Transverse colon (tissue), 4 donors: ENCODE measurements at regions of chr7 and their contacts with region 1.

Region 1: DNA sequence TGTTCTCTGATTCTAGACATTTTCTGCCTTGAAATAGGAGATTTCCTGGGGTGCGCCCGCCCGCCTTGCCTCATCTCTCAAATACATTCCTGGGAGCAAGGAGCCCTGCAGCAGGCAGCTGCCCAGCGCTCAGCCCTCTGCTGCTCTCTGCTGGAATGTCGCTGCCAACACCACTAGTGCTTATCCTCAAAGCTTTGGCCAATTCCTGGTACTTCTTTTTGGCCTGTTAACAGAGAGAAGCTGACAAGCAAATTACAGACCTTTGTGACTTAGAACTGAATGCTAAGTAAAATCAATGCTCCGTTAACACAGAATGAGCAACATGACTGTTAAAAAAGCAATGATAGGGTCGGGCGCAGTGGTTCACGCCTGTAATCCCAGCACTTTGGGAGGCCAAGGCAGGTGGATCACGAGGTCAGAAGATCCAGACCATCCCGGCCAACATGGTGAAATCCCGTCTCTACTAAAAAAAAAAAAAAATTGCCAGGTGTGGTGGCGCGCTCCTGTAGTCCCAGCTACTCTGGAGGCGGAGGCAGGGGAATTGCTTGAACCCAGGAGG is 41.9 kb upstream of the SYPL1 start:
- DNase-seq: peak; percentile 84
- H3K4me3 ChIP-seq: no peak overlapping the region
- H3K27ac ChIP-seq: no peak overlapping the region
- H3K4me1 ChIP-seq: peaks cover 0 to 21% (median 5%) of the 10 kb centered on the region in 4 donors
- H3K27me3 ChIP-seq: peaks cover 3% of the 10 kb centered on the region
- CTCF ChIP-seq: peak; percentile 90 to 97 (median 94)
- EP300 ChIP-seq: no peak
- POLR2A ChIP-seq: no peak

Region 2: DNA sequence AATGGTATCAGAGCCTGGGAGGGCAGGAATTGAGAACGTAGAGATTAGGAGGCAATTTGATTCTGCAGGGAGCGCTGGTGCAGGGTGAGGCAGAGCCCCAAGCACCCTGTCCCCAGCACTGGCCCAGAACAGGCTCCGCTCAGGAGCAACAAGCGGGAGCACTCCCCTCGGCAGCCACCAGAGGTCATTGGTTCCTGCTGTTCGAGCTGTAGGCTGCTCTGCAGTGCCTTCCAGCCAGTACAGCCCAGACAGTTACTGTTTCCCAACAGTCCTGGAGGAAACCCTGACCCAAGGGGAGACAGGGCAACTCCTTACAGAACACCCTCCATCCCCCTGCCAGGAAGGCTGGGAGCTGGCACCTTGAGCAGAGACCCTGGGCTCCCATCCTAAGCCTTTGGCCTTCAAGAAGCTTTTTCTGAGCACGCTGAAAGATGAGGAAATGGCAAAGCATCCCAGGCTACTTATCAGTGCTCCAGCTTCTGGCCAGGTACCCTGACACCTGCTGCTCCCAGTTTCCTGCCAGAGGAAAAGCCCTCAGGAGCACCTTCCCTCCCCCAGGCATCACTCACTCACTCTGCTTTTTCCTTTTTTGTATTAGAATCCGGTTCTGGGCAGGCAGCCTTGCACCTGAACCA is 501.5 kb before region 1 on chr7:
- in situ Hi-C with region 1: loop called in 1 of 4 experiments (anchors 25 kb)
- intact Hi-C with region 1: no loop called
- DNase-seq: peak; percentile 83
- H3K4me3 ChIP-seq: no peak overlapping the region
- H3K27ac ChIP-seq: no peak overlapping the region
- H3K4me1 ChIP-seq: peaks cover 7 to 16% (median 10%) of the 10 kb centered on the region in 4 donors
- H3K27me3 ChIP-seq: no peaks in the 10 kb centered on the region
- CTCF ChIP-seq: peak; percentile 78 to 86 (median 83)
- EP300 ChIP-seq: no peak
- POLR2A ChIP-seq: no peak

Region 3: GRCh38 chr7:105759670-105760550 is 394.1 kb before region 1 on chr7:
- in situ Hi-C with region 1: loop called in 1 of 4 experiments (anchors 25 kb)
- intact Hi-C with region 1: no loop called
- DNase-seq: peak; percentile 51
- H3K4me3 ChIP-seq: no peak overlapping the region
- H3K27ac ChIP-seq: peak overlapping the region in 1 of 4 donors; percentile 21
- H3K4me1 ChIP-seq: peaks cover 5 to 12% (median 6%) of the 10 kb centered on the region in 4 donors
- H3K27me3 ChIP-seq: no peaks in the 10 kb centered on the region
- CTCF ChIP-seq: peak; percentile 50 to 65 (median 61)
- EP300 ChIP-seq: no peak
- POLR2A ChIP-seq: no peak

Region 4: DNA sequence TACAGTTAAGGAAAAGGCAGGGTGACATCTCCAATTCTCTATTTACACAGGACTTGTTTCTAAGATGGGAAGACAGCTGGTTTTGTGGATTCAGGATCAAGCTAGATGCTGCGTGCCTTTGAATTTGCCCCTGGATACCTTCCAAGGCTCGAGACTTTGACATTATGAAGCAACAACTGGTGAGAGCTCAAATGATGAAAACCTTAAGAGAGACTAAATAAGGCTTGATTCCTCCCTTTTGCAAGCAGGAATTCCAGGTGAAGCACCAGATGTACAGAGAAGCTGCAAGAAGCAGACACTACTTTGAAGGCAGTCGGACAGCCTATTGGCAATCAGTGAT is 358.6 kb before region 1 on chr7:
- in situ Hi-C with region 1: no loop called
- intact Hi-C with region 1: loop called (anchors 10 kb)
- DNase-seq: no peak
- H3K4me3 ChIP-seq: no peak overlapping the region
- H3K27ac ChIP-seq: peak overlapping the region; percentile 61 to 81 (median 65)
- H3K4me1 ChIP-seq: peaks cover 0 to 22% (median 10%) of the 10 kb centered on the region in 4 donors
- H3K27me3 ChIP-seq: no peaks in the 10 kb centered on the region
- CTCF ChIP-seq: no peak
- EP300 ChIP-seq: no peak
- POLR2A ChIP-seq: no peak

Region 5: DNA sequence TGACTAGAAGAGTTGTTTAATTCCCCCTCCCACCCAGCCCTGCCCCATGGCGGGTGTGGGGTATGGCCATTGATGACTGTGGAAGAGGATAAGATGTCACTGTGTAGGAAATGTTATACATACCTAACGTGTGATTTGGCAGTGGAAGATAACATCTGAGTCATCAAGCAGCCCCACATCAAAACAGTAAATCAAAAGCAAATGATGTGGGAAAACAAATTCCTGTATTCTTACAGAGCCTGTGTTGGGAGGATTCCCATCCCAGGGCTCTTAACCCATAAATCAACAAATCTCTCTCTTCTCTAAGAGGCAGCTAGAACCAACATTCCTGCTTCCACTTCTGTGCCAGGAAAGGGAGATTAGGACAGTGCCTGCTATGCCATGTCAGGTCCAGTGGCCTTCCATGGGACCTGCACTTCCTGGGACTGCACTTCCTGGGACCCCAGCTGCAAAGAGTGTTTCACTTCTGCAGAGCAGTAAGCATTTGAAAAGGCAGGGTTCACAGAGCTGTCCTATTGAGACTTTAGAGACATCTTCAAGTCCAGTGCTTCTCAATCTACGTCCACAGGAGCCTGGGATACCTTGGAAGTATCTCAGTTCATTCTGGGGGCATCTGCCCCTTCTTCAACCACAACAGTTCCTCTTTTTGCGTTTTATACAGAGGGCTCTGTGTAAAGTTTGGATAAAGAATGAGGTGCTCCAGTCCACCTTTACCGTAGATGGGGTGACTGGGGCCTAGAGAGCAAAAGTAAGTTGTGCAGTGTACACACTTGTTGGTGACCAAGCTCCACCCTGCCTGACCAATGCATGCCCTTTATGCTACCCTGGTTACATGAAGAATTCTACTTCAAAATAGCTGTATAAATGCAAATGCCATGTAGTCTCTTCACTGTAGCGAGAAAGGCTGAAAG is 323.3 kb before region 1 on chr7:
- in situ Hi-C with region 1: no loop called
- intact Hi-C with region 1: no loop called
- DNase-seq: no peak
- H3K4me3 ChIP-seq: no peak overlapping the region
- H3K27ac ChIP-seq: peak overlapping the region; percentile 59 to 81 (median 74)
- H3K4me1 ChIP-seq: peaks cover 8 to 49% (median 12%) of the 10 kb centered on the region in 4 donors
- H3K27me3 ChIP-seq: no peaks in the 10 kb centered on the region
- CTCF ChIP-seq: no peak
- EP300 ChIP-seq: no peak
- POLR2A ChIP-seq: no peak

Region 6: DNA sequence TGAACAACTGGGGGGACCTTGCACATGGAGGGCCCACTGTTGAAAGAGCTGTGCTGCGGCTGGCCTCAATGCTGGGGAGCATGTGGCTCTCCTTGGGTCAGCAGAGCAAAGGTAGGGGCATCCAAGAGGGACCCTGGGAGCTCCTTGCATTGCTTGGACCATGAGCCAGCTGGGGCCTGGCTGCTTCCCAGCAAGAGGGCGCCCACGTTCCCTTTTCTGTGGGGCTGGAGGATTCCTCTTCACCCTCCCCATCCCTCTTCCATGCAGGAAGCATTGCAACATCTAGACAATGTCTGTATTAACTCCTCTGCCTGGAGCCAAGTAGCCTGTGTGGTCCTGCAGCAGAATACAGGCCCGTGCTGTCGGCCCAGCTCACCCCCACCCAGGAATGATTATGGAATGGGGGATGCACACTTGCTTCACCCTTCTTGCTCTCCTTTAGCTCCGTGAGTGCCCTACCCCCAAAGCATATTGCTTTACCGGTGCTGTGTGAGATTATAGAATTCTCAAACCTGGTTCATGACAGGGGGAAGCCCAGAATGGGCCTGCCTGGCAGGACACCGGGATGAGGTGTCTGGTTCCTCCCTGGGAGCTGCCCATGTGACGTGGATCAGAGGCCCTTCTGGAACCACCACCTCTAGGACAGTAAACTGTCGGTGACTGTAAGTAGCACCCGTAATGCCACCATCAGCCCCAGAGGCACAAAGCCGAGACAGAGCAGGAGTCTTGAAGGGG is 103.8 kb before region 1 on chr7:
- in situ Hi-C with region 1: loop called (anchors 5 kb)
- intact Hi-C with region 1: no loop called
- DNase-seq: no peak
- H3K4me3 ChIP-seq: no peak overlapping the region
- H3K27ac ChIP-seq: peak overlapping the region; percentile 2 to 62 (median 43)
- H3K4me1 ChIP-seq: peaks cover 0 to 2% (median 0%) of the 10 kb centered on the region in 4 donors
- H3K27me3 ChIP-seq: no peaks in the 10 kb centered on the region
- CTCF ChIP-seq: peak in 1 of 5 experiments; percentile 5
- EP300 ChIP-seq: no peak
- POLR2A ChIP-seq: no peak

Region 7: GRCh38 chr7:106056513-106057203 is 97.3 kb before region 1 on chr7:
- in situ Hi-C with region 1: loop called (anchors 5 kb)
- intact Hi-C with region 1: loop called (anchors 2 kb)
- DNase-seq: peak; percentile 77
- H3K4me3 ChIP-seq: no peak overlapping the region
- H3K27ac ChIP-seq: no peak overlapping the region
- H3K4me1 ChIP-seq: peaks cover 6 to 22% (median 14%) of the 10 kb centered on the region in 4 donors
- H3K27me3 ChIP-seq: no peaks in the 10 kb centered on the region
- CTCF ChIP-seq: peak; percentile 85 to 92 (median 87)
- EP300 ChIP-seq: no peak
- POLR2A ChIP-seq: no peak

Region 8: DNA sequence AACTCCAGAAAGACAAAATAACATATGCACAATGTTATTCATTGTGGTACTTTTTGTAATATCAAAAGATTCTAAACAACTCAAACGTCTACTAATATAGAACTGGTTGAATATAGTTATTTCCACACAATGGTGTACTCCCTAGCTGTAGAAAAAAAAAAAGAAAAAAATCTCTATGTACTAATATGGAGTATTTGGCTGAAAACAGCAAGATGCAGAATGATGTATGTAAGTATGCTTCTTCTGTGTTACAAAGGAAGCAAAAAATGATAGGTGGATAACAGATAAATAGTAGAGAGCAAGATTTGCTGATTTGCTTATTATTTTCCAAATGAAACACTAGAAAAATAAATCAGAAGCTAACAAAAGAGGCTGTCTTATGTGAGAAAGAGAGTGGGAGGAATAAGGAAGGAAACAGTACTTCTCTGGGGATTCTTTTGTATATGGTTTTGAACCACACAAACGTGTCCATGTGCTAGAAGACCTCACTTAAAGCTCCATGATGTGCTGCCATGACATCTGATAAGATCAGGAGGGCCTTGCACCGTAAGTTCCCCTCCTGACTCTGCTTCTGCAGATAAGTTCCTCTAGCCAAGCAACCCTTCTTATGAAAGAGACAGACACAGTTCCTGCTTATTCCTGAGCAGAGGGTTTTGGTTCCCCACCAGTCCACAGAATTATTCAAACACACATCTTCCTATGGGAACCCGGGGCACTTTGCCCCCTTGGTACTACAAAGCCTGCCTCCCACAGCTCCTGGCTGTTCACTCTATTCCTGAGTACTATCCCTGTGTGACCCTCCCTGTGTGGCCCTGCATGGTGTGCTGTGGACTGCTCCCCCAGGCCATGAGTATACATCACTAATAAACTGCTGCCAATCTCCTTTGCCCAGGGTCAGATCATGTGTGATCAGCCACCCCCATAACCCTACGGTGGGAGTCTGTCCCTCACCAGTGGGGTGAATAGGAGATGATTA is 347.9 kb after region 1 on chr7:
- in situ Hi-C with region 1: no loop called
- intact Hi-C with region 1: no loop called
- DNase-seq: no peak
- H3K4me3 ChIP-seq: no peak overlapping the region
- H3K27ac ChIP-seq: no peak overlapping the region
- H3K4me1 ChIP-seq: no peaks in the 10 kb centered on the region
- H3K27me3 ChIP-seq: no peaks in the 10 kb centered on the region
- CTCF ChIP-seq: no peak
- EP300 ChIP-seq: no peak
- POLR2A ChIP-seq: no peak

Region 9: DNA sequence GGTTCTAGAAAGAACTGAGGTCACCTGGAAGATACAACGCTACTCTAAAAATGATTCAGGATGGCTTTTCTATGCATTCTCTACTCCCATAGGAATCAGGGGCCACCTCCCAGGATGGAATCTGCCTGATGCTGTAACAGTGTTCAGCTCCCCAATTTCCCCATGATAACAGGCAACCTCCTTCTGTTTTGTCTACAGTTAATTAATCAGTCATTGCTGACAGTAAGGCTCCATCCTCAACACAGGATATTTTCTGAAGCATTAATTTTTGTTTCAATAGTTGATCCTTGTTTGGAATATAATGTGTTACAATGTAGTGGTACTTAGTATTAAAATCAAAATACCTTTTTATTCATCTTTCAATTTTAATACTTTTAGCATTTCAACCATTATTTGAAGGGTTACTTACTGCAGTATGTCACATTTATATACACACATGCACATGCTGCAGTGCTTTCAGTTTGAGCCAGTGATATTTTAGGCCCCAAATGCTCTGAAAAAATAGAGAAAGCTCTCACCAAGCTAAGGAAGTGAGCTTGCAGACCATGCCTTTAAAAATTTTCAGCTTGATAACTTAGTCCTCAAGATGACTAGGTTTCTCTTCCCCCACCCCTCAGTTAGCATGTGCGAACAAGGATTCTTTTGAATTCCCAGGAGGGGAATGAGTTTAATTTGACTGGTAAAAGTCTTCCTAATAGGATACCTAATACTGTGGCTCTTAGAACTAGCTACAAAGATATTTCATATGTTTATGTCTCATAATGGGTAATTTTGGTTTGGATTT is 710.5 kb after region 1 on chr7:
- in situ Hi-C with region 1: no loop called
- intact Hi-C with region 1: no loop called
- DNase-seq: no peak
- H3K4me3 ChIP-seq: peak overlapping the region in 1 of 4 donors; percentile 42
- H3K27ac ChIP-seq: peak overlapping the region; percentile 55 to 77 (median 70)
- H3K4me1 ChIP-seq: peaks cover 0 to 24% (median 0%) of the 10 kb centered on the region in 4 donors
- H3K27me3 ChIP-seq: no peaks in the 10 kb centered on the region
- CTCF ChIP-seq: no peak
- EP300 ChIP-seq: no peak
- POLR2A ChIP-seq: no peak